ENCODE measurements at regions of chr7 and their contacts with region 1.

Region 1: GRCh38 chr7:42128703-42129102 is 108.3 kb downstream of the GLI3 start:
- DNase-seq: no peak
- ATAC-seq: no peak
- H3K4me3 ChIP-seq: no peak overlapping the region
- H3K27ac ChIP-seq: no peak overlapping the region
- H3K4me1 ChIP-seq: no peaks in the 10 kb centered on the region
- H3K27me3 ChIP-seq: peaks cover 0 to 20% of the 10 kb centered on the region in 2 experiments; a peak in 3 of 5 replicates
- CTCF ChIP-seq: no peak
- EP300 ChIP-seq: no peak
- POLR2A ChIP-seq: no peak
- RAD21 ChIP-seq: no peak

Region 2: GRCh38 chr7:42151309-42151708 is 22.6 kb after region 1 on chr7:
- CTCF ChIA-PET with region 1: no interaction called
- POLR2A ChIA-PET with region 1: no interaction called
- in situ Hi-C with region 1: no loop called
- intact Hi-C with region 1: loop called (anchors 1 kb)
- DNase-seq: no peak
- ATAC-seq: no peak
- H3K4me3 ChIP-seq: no peak overlapping the region
- H3K27ac ChIP-seq: no peak overlapping the region
- H3K4me1 ChIP-seq: peaks cover 7% of the 10 kb centered on the region
- H3K27me3 ChIP-seq: peaks cover 0 to 15% of the 10 kb centered on the region in 2 experiments; a peak in 1 of 5 replicates
- CTCF ChIP-seq: no peak
- EP300 ChIP-seq: no peak
- POLR2A ChIP-seq: no peak
- RAD21 ChIP-seq: no peak

Measured in HepG2 (cell line).